ENCODE measurements at regions of chr19 and their contacts with region 1.

Region 1: DNA sequence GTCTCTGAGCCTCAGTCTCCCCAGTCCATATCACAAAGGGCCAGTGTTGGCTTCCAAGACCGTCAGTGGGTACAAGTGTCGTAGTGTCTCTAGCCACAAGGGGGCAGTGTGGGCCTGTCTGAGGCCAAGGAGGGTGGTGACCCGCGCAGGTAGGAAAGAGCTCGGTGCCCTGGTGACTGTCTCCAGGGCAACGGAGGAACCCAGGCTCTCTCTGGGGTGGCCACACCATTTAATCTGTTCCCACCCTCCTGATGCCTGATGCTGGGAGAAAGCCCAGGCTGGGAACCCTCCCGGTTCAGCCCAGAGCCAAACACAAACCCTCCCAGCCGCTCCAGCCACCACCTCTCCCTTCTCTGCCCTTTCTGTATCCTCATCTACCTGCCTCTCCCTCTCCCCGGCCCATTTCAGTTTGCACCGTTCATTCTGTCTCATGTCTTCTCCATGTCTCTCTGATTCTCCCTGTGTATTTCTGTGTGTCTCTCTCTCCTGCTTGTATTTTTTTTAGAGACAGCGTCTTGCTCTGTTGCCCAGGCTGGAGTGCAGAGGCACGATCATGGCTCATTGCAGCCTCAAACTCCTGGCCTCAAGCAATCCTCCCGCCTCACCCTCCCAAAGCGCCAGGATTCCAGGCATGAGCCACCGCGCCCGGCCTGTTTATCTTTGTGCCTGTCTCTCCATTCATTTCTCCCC is 17.5 kb upstream of the MEIS3 start:
- DNase-seq: peak; percentile 94
- H3K4me3 ChIP-seq: no peak overlapping the region
- H3K27ac ChIP-seq: no peak overlapping the region
- H3K4me1 ChIP-seq: peaks cover 0 to 8% (median 5%) of the 10 kb centered on the region in 6 donors
- H3K27me3 ChIP-seq: peaks cover 0 to 97% (median 43%) of the 10 kb centered on the region in 7 donors
- CTCF ChIP-seq: peak; percentile 76 to 93 (median 90)
- POLR2A ChIP-seq: no peak

Region 2: GRCh38 chr19:47697863-47698609 is 261.2 kb after region 1 on chr19:
- intact Hi-C with region 1: loop called (anchors 2 kb)
- DNase-seq: peak; percentile 88
- H3K4me3 ChIP-seq: no peak overlapping the region
- H3K27ac ChIP-seq: peak overlapping the region in 4 of 8 donors; percentile 22 to 51 (median 34)
- H3K4me1 ChIP-seq: peaks cover 0 to 11% (median 6%) of the 10 kb centered on the region in 6 donors
- H3K27me3 ChIP-seq: no peaks in the 10 kb centered on the region
- CTCF ChIP-seq: peak; percentile 85 to 96 (median 92)
- POLR2A ChIP-seq: no peak

Measured in spleen (tissue), 13 donors.